ENCODE measurements at regions of chr9 and their contacts with region 1.

Region 1: DNA sequence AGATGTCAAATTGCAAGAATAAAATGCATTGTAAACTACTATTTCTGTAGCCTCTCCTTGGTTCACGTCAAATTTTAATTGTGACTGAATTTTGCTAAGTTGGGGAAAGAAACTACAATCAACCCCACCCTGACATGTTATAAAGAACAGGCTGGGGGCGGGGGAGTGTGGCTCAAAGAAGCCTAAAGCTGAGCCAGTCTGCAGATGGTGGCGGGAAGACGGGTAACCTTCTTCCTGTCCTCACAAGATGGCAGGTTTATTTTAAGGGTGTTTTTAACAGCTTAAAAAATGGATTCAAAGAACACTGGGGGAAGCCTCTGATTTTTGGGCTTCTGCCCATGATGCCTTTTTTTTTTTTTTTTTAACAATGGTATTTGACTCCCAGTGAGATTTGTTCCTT is 68.5 kb upstream of the MELK start:
- DNase-seq: no peak
- ATAC-seq: no peak
- H3K4me3 ChIP-seq: no peak overlapping the region
- H3K27ac ChIP-seq: no peak overlapping the region
- H3K4me1 ChIP-seq: no peaks in the 10 kb centered on the region
- H3K27me3 ChIP-seq: no peaks in the 10 kb centered on the region

Region 2: GRCh38 chr9:35313916-35314315 is 1190.2 kb before region 1 on chr9:
- intact Hi-C with region 1: no loop called
- DNase-seq: no peak
- ATAC-seq: no peak
- H3K4me3 ChIP-seq: no peak overlapping the region
- H3K27ac ChIP-seq: no peak overlapping the region
- H3K4me1 ChIP-seq: peaks cover 4% of the 10 kb centered on the region
- H3K27me3 ChIP-seq: no peaks in the 10 kb centered on the region

Region 3: GRCh38 chr9:36268007-36268427 is 236.1 kb before region 1 on chr9:
- intact Hi-C with region 1: no loop called
- DNase-seq: no peak
- ATAC-seq: no peak
- H3K4me3 ChIP-seq: no peak overlapping the region
- H3K27ac ChIP-seq: no peak overlapping the region
- H3K4me1 ChIP-seq: no peaks in the 10 kb centered on the region
- H3K27me3 ChIP-seq: no peaks in the 10 kb centered on the region

Region 4: GRCh38 chr9:36566813-36567221 is 62.7 kb after region 1 on chr9:
- intact Hi-C with region 1: loop called in 1 of 4 experiments (anchors 10 kb)
- DNase-seq: peak in 1 of 3 donors; percentile 32
- ATAC-seq: peak; percentile 74 to 75
- H3K4me3 ChIP-seq: no peak overlapping the region
- H3K27ac ChIP-seq: peak overlapping the region; percentile 45
- H3K4me1 ChIP-seq: no peaks in the 10 kb centered on the region
- H3K27me3 ChIP-seq: no peaks in the 10 kb centered on the region

Measured in right cardiac atrium (tissue), 5 donors.